ENCODE measurements at regions of chr6 and their contacts with region 1.

Region 1: GRCh38 chr6:12605888-12606345 is 110.7 kb upstream of the PHACTR1 start:
- DNase-seq: no peak
- ATAC-seq: peak; percentile 60

Region 2: DNA sequence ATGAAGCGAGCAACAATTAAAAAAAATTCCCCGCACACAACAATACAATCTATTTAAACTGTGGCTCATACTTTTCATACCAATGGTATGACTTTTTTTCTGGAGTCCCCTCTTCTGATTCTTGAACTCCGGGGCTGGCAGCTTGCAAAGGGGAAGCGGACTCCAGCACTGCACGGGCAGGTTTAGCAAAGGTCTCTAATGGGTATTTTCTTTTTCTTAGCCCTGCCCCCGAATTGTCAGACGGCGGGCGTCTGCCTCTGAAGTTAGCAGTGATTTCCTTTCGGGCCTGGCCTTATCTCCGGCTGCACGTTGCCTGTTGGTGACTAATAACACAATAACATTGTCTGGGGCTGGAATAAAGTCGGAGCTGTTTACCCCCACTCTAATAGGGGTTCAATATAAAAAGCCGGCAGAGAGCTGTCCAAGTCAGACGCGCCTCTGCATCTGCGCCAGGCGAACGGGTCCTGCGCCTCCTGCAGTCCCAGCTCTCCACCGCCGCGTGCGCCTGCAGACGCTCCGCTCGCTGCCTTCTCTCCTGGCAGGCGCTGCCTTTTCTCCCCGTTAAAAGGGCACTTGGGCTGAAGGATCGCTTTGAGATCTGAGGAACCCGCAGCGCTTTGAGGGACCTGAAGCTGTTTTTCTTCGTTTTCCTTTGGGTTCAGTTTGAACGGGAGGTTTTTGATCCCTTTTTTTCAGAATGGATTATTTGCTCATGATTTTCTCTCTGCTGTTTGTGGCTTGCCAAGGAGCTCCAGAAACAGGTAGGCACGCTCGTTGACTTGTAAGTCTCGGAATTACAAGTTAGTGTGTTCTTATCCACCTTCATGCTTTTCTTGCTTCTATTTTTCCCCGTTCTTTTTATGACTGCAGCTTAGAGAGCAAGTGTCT is 315.7 kb before region 1 on chr6 and contains the start of gene EDN1:
- intact Hi-C with region 1: loop called (anchors 1 kb)
- DNase-seq: peak; percentile 87
- ATAC-seq: peak; percentile 75
- total RNA-seq, gene EDN1: 2.9 TPM

Region 3: GRCh38 chr6:12395898-12396297 is 210.0 kb before region 1 on chr6:
- intact Hi-C with region 1: loop called (anchors 10 kb)
- DNase-seq: no peak
- ATAC-seq: no peak

Measured in Right ventricle myocardium inferior (tissue), 1 donor.